IMR-90 (cell line): ENCODE measurements at regions of chr19 and their contacts with region 1.

Region 1: DNA sequence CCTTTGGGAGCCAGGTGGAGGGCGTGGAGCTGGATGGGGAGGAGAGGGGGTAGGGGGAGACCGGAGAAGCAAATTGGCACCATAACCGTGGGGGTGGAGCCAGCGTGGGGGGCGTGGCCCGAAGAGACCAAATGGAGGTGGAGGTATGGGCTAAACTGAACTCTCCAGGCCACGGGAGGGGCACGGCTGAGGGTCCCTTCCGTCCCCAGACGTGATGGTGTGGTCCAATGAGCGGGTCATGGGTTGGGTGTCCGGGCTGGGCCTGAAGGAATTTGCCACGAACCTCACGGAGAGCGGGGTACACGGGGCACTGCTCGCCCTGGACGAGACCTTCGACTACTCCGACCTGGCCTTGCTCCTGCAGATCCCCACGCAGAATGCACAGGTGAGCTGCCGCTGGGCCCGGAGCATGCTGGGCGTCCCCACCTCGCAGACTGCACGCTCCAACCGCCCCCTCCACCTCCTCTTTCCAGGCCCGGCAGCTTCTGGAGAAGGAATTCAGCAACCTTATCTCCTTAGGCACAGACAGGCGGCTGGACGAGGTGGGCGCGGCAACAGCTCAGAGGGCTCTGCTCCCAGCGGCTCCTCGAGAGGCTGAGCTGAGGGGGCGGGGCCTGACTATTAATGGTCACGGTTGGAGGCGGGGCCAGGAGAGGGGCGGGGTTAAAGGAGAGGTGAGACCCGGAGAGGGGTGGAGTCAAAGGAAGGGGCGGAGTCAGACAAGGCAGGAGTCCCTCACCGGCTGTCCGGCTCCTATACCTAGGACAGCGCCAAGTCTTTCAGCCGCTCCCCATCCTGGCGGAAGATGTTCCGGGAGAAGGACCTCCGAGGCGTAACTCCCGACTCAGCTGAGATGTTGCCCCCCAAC is 6.2 kb downstream of the HRC start:
- DNase-seq: peak; percentile 86
- ATAC-seq: peak; percentile 83
- H3K4me3 ChIP-seq: peak overlapping the region; percentile 53
- H3K27ac ChIP-seq: no peak overlapping the region
- H3K4me1 ChIP-seq: peaks cover 12% of the 10 kb centered on the region
- H3K27me3 ChIP-seq: no peaks in the 10 kb centered on the region
- CTCF ChIP-seq: no peak
- POLR2A ChIP-seq: no peak
- RAD21 ChIP-seq: no peak

Region 2: GRCh38 chr19:49073514-49074378 is 75.3 kb before region 1 on chr19:
- CTCF ChIA-PET with region 1: no interaction called
- POLR2A ChIA-PET with region 1: no interaction called
- dilution Hi-C with region 1: no loop called
- in situ Hi-C with region 1: no loop called
- intact Hi-C with region 1: loop called (anchors 1 kb)
- DNase-seq: no peak
- ATAC-seq: peak; percentile 35; the same call in 1 of the 2 replicates
- H3K4me3 ChIP-seq: no peak overlapping the region
- H3K27ac ChIP-seq: no peak overlapping the region
- H3K4me1 ChIP-seq: no peaks in the 10 kb centered on the region
- H3K27me3 ChIP-seq: peaks cover 36% of the 10 kb centered on the region
- CTCF ChIP-seq: peak; percentile 15; the same call in 1 of the 2 replicates
- POLR2A ChIP-seq: no peak
- RAD21 ChIP-seq: peak; percentile 35

Region 3: GRCh38 chr19:49106648-49107135 is 42.3 kb before region 1 on chr19:
- CTCF ChIA-PET with region 1: no interaction called
- POLR2A ChIA-PET with region 1: no interaction called
- dilution Hi-C with region 1: no loop called
- in situ Hi-C with region 1: no loop called
- intact Hi-C with region 1: no loop called
- DNase-seq: peak; percentile 45
- ATAC-seq: peak; percentile 57; the same call in 1 of the 2 replicates
- H3K4me3 ChIP-seq: no peak overlapping the region
- H3K27ac ChIP-seq: no peak overlapping the region
- H3K4me1 ChIP-seq: no peaks in the 10 kb centered on the region
- H3K27me3 ChIP-seq: no peaks in the 10 kb centered on the region
- CTCF ChIP-seq: peak; percentile 67
- POLR2A ChIP-seq: no peak
- RAD21 ChIP-seq: peak; percentile 33

Region 4: DNA sequence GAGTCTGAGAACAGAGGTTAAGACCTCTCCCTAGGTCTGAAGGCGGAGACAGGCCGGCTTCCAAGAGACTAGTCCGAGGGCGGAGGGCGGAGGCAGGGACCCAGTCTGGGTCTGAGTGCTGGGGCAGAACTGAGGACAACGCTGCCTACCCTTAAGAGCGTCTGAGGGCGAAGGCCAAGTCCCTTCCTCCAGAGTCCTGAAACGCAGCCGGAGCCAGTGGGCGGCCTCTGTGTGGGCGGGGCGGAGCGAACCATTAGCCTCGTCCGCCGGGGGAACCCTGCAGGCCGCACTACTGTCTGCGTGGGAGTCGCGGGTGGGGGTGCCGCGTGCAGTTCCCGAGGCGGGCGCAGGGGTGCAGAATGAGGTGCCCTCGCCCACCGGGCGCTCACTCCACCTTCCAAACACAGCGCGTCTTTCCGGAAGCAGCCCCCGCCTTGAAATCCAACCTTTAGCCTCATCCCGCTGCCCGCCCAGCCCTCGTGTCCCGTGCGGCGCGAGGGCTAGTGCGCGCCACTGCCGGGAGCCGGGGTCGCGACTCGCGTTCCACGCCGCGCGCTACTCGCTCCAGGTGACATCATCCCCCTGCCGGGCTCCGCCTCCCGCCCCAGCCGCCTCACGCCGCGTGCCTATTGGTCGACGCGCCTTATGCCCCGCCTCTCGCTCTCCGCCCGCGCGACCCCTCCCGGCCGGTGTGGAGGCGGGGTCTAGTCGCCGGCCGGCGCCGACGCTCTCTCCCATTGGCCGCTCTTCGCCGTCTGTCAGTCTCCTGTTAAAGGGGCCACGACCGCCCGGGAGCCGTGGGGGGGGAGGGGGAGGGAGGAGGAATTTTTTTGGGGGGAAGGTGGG is 30.2 kb before region 1 on chr19 and contains the start of gene C19orf73:
- CTCF ChIA-PET with region 1: interaction called, 6 read pairs
- POLR2A ChIA-PET with region 1: no interaction called
- dilution Hi-C with region 1: no loop called
- in situ Hi-C with region 1: no loop called
- intact Hi-C with region 1: loop called (anchors 1 kb)
- DNase-seq: peak; percentile 91
- ATAC-seq: peak; percentile 86
- H3K4me3 ChIP-seq: peak within 1 kb of the TSS; percentile 59
- H3K27ac ChIP-seq: peak within 1 kb of the TSS; percentile 81
- H3K4me1 ChIP-seq: peaks cover 6% of the 10 kb centered on the region
- H3K27me3 ChIP-seq: peaks cover 8% of the 10 kb centered on the region
- CTCF ChIP-seq: no peak; the same call in 1 of the 2 replicates
- POLR2A ChIP-seq: peak; percentile 50; the same call in 1 of the 2 replicates
- RAD21 ChIP-seq: no peak
- total RNA-seq, gene C19orf73: 0.28 TPM in 1 of 2 replicates, not detected in the other

Region 5: GRCh38 chr19:49421039-49421877 is 272.2 kb after region 1 on chr19:
- CTCF ChIA-PET with region 1: no interaction called
- POLR2A ChIA-PET with region 1: no interaction called
- dilution Hi-C with region 1: no loop called
- in situ Hi-C with region 1: no loop called
- intact Hi-C with region 1: no loop called
- DNase-seq: peak; percentile 17
- ATAC-seq: peak; percentile 79
- H3K4me3 ChIP-seq: no peak overlapping the region
- H3K27ac ChIP-seq: no peak overlapping the region
- H3K4me1 ChIP-seq: peaks cover 2% of the 10 kb centered on the region; the same call in 1 of the 2 replicates
- H3K27me3 ChIP-seq: peaks cover 94% of the 10 kb centered on the region
- CTCF ChIP-seq: no peak
- POLR2A ChIP-seq: no peak
- RAD21 ChIP-seq: no peak